Heart right ventricle (tissue), 16 donors: ENCODE measurements at regions of chr7 and their contacts with region 1.

Region 1: GRCh38 chr7:75650681-75651080 is 88.1 kb downstream of the HIP1 start:
- DNase-seq: peak; percentile 61 to 70
- ATAC-seq: peak; percentile 65 to 94 (median 80)
- H3K4me3 ChIP-seq: no peak overlapping the region
- H3K27ac ChIP-seq: peak overlapping the region in 8 of 10 donors; percentile 4 to 73 (median 53)
- H3K4me1 ChIP-seq: peaks cover 7 to 29% (median 19%) of the 10 kb centered on the region in 9 donors
- H3K27me3 ChIP-seq: no peaks in the 10 kb centered on the region
- CTCF ChIP-seq: no peak

Region 2: DNA sequence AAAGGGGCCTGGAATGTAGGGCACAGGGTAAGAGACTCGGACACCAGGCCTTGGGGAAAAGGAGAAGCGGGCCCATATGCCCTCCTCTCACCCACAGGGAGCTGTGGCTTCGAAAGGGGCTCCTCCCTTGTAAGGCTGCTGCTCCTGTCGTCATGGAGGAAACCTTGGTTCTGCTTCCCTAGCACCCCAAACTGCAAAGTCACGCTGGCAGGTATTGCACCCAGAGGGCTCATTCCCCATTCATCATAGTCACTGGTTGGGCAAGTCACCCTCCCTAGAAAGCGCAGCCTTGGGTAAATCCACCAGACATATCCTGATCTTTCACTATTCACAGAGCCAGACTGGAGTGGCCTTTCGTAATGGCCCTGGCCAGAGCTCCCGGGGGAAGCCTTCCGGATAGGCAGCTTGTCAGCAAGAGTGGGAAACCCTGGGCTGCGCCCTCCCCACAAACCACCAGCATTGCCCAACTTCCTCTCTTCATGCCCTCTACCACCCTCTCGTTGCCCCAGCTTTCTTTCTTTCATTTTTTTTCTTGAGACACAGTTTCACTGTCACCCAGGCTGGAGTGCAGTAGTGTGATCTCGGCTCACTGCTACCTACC is 32.9 kb before region 1 on chr7:
- intact Hi-C with region 1: loop called in 1 of 10 experiments (anchors 5 kb)
- DNase-seq: peak; percentile 48 to 63
- ATAC-seq: peak; percentile 55 to 83 (median 76)
- H3K4me3 ChIP-seq: peak overlapping the region in 1 of 10 donors; percentile 8
- H3K27ac ChIP-seq: peak overlapping the region in 5 of 10 donors; percentile 18 to 91 (median 62)
- H3K4me1 ChIP-seq: peaks cover 0 to 72% (median 0%) of the 10 kb centered on the region in 9 donors
- H3K27me3 ChIP-seq: no peaks in the 10 kb centered on the region
- CTCF ChIP-seq: no peak

Region 3: DNA sequence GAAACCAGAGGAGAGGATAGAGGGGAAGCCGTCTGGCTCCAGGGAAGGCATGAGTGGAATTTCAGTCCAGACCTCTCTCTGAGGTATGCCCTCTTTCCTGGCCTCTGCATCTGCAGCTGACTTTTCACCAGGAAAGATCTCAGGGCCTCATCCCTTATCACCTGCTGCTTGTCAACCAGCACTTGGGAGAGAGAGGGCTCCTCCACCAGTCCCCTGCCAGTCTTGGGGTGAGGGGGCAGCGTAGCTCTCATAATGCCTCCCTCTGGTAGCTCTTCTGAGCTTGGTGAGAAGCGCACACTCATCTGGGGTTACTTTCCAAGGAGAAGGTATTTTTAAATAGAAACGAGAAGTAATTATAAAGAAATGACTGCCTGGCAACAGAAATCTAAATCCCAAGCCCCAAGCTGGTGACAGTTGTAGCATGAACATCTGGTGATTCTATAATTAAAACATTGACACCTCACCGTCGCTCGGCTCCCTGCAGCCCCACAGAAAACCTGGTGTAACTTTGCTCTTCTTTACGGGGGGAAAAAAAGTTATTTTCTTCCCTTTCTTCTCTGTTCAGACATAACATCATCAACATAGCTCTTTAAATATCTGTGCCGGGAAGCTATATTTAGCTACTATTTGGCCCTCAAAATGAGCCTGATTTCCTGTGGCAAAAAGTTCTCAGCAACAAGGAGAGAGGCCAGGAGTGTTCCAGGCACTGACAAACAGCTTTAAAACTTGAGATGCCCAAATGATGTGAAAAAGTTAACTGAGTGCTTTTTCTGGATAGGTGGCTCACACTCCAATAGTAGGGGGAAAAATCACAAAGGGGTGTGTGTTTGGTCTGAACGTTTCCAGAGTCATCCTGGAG is 61.2 kb after region 1 on chr7:
- intact Hi-C with region 1: loop called in 1 of 10 experiments (anchors 10 kb)
- DNase-seq: peak in 1 of 2 donors; percentile 28
- ATAC-seq: peak; percentile 71 to 94 (median 82)
- H3K4me3 ChIP-seq: peak overlapping the region in 6 of 10 donors; percentile 9 to 29 (median 20)
- H3K27ac ChIP-seq: peak overlapping the region; percentile 61 to 90 (median 84)
- H3K4me1 ChIP-seq: peaks cover 12 to 45% (median 33%) of the 10 kb centered on the region in 9 donors
- H3K27me3 ChIP-seq: no peaks in the 10 kb centered on the region
- CTCF ChIP-seq: no peak

Region 4: GRCh38 chr7:75756991-75757676 is 106.5 kb after region 1 on chr7:
- intact Hi-C with region 1: loop called in 2 of 10 experiments (anchors 10 kb)
- DNase-seq: peak in 1 of 2 donors; percentile 17
- ATAC-seq: peak in 1 of 8 donors; percentile 53
- H3K4me3 ChIP-seq: no peak overlapping the region
- H3K27ac ChIP-seq: no peak overlapping the region
- H3K4me1 ChIP-seq: peaks cover 0 to 1% (median 0%) of the 10 kb centered on the region in 9 donors
- H3K27me3 ChIP-seq: no peaks in the 10 kb centered on the region
- CTCF ChIP-seq: peak in 8 of 9 donors; percentile 11 to 54 (median 46)